ENCODE measurements at regions of chr4 and their contacts with region 1.

Region 1: GRCh38 chr4:181061787-181062186 is 1181.4 kb upstream of the TENM3 start:
- DNase-seq: no peak
- ATAC-seq: no peak
- H3K4me3 ChIP-seq: no peak overlapping the region
- H3K4me3 Mint-ChIP-seq: no peak overlapping the region
- H3K27ac ChIP-seq: no peak overlapping the region
- H3K27ac Mint-ChIP-seq: no peak overlapping the region
- H3K4me1 ChIP-seq: no peaks in the 10 kb centered on the region
- H3K4me1 Mint-ChIP-seq: no peaks in the 10 kb centered on the region
- H3K27me3 ChIP-seq: no peaks in the 10 kb centered on the region
- H3K27me3 Mint-ChIP-seq: no peaks in the 10 kb centered on the region
- CTCF ChIP-seq: no peak

Region 2: DNA sequence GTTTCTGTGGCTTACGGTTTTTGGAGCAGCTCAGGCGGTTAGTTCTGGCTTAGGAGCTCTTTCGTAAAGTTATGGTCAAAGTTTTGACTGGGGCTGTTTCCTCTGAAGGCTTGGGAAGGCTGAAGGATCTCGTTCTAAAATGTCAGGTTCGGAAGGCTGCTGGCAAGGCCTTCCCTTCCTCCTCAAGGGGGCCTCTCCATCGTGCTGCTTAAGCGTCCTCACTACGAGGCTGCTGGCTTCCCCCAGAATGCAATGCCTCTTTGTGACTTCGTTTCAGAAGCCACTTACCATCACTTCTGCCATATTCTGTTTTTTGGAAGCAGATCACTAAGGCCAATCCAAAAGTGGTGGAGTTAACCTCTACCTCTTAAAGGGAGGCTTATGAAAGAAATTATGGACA is 15.0 kb before region 1 on chr4:
- CTCF ChIA-PET with region 1: no interaction called
- POLR2A ChIA-PET with region 1: no interaction called
- intact Hi-C with region 1: loop called in 1 of 2 experiments (anchors 1 kb)
- DNase-seq: no peak
- ATAC-seq: no peak
- H3K4me3 ChIP-seq: no peak overlapping the region
- H3K4me3 Mint-ChIP-seq: no peak overlapping the region
- H3K27ac ChIP-seq: no peak overlapping the region
- H3K27ac Mint-ChIP-seq: no peak overlapping the region
- H3K4me1 ChIP-seq: no peaks in the 10 kb centered on the region
- H3K4me1 Mint-ChIP-seq: no peaks in the 10 kb centered on the region
- H3K27me3 ChIP-seq: no peaks in the 10 kb centered on the region
- H3K27me3 Mint-ChIP-seq: no peaks in the 10 kb centered on the region
- CTCF ChIP-seq: no peak

Region 3: DNA sequence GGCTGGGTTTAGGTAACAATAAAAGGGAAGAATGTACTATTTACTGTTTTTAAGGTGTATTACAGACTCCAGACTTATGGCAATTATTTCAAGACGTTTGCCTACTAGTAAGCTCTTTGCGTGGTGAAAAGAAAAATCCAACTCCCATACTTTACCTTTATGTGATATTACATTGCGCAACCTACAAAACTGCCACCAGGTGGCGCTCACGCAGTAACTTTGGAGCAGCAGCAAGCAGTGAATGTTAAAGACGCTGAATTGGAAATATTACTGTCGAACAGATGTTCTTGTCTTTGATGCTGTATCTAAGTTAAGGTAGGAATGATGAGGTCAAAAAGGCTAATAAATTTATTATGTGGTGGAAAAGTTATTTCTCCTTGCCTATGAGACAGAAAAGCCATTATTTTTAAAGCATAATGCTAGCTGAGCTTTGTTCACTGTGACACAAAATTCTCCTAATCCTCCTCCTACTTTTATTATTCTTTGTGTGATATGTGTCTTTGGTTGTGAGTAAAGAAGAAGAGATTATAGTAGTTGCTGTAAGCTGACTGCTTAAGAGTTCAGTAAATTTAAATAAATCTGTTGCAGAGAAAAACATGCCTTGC is 81.6 kb after region 1 on chr4:
- CTCF ChIA-PET with region 1: no interaction called
- POLR2A ChIA-PET with region 1: no interaction called
- intact Hi-C with region 1: no loop called
- DNase-seq: peak; percentile 22 to 70 (median 62)
- ATAC-seq: peak; percentile 31
- H3K4me3 ChIP-seq: no peak overlapping the region
- H3K4me3 Mint-ChIP-seq: no peak overlapping the region
- H3K27ac ChIP-seq: no peak overlapping the region
- H3K27ac Mint-ChIP-seq: no peak overlapping the region
- H3K4me1 ChIP-seq: no peaks in the 10 kb centered on the region
- H3K4me1 Mint-ChIP-seq: no peaks in the 10 kb centered on the region
- H3K27me3 ChIP-seq: no peaks in the 10 kb centered on the region
- H3K27me3 Mint-ChIP-seq: peaks cover 4% of the 10 kb centered on the region
- CTCF ChIP-seq: peak; percentile 89